ENCODE measurements at regions of chr4 and their contacts with region 1.

Region 1: DNA sequence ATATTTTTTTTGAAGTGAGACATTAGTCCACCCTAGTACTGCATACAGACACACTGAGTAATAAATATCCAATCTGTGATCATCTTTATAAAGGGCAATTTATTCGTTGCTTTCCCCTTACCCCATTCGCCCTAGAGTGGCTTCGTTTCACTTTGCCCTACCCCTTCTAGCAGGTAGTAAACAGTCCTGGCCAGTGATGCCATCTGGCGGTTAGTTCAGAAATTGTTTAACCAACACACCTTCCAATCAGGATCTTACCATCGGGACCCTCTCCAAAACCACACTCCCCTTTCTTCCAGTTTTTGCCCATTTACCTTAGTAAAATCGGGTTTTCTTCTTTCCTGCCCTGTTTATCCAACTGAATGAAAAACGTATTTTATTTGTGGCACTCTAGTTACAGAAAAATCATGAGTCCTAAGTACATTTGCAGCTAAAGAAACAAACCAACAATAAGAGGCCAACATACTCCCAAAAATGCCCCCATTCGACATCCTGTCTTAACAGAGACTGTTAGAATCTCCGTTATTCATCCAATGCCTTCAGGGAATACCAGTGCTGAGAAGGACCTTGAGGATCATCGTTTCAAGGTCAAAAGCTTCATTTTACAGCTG is 2.2 kb downstream of the PPA2 start:
- DNase-seq: peak; percentile 83
- ATAC-seq: peak; percentile 49
- H3K4me3 Mint-ChIP-seq: peak overlapping the region; percentile 98
- H3K27ac Mint-ChIP-seq: peak overlapping the region; percentile 80
- H3K4me1 Mint-ChIP-seq: peaks cover 46% of the 10 kb centered on the region
- H3K27me3 Mint-ChIP-seq: no peaks in the 10 kb centered on the region

Region 2: DNA sequence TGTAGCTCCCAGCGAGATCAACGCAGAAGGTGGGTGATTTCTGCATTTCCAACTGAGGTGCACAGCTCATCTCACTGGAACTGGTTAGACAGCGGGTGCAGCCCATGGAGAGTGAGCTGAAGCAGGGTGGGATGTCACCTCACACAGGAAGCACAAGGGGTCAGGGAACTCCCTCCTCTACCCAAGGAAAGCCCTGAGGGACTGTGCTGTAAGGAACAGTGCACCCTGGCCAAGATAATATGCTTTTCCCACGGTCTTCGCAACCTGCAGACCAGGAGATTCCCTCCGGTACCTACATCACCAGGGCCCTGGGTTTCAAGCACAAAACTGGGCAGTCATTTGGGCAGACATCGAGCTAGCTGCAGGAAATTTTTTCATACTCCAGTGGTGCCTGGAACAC is 541.4 kb before region 1 on chr4:
- CTCF ChIA-PET with region 1: interaction called, 5 read pairs
- POLR2A ChIA-PET with region 1: no interaction called
- intact Hi-C with region 1: loop called (anchors 1 to 2 kb)
- DNase-seq: no peak
- ATAC-seq: no peak
- H3K4me3 Mint-ChIP-seq: no peak overlapping the region
- H3K27ac Mint-ChIP-seq: no peak overlapping the region
- H3K4me1 Mint-ChIP-seq: peaks cover 31% of the 10 kb centered on the region
- H3K27me3 Mint-ChIP-seq: peaks cover 5% of the 10 kb centered on the region

Region 3: GRCh38 chr4:105061136-105061696 is 410.5 kb before region 1 on chr4:
- CTCF ChIA-PET with region 1: no interaction called
- POLR2A ChIA-PET with region 1: no interaction called
- intact Hi-C with region 1: loop called (anchors 1 kb)
- DNase-seq: peak; percentile 64
- ATAC-seq: peak; percentile 62
- H3K4me3 Mint-ChIP-seq: peak overlapping the region; percentile 48
- H3K27ac Mint-ChIP-seq: peak overlapping the region; percentile 89
- H3K4me1 Mint-ChIP-seq: peaks cover 53% of the 10 kb centered on the region
- H3K27me3 Mint-ChIP-seq: peaks cover 2% of the 10 kb centered on the region

Region 4: DNA sequence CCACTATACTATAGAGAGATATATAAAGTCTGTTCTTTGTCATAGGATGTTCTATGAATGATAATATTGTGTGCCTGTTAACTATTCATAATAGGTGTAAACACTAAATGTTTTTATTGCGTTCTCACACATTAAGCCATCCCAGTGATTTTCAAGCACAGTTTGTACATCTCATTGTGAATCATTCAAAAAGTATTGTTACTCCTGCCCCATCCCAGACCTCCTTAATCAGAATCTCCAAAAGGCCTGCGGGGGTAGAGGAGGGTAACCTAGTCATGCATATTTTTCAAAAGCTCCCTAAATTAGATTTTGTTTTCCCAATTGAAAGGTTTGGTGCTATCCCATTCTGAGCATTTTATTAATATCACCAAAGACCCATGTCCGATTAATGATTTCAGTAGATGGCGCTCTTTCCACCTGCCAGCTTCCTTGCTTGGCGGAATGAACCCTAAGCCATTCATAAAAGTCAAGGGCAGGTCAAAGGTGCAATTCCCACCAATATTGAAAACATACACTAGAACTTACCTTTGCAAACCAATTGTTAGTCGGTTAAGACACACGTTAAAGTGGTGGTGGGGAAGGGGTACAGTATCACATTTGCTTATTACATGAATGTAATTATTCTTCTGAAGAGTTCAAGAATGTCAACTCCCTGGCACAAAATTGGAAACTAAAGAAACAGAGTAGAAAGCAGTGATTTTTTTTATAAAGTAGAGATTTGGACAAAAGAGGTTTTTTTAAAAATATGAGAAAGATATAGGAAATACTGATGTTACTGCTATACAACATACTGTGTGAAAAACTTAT is 330.8 kb before region 1 on chr4:
- CTCF ChIA-PET with region 1: interaction called, 16 read pairs
- POLR2A ChIA-PET with region 1: interaction called, 12 read pairs
- intact Hi-C with region 1: loop called (anchors 1 kb)
- DNase-seq: peak; percentile 53
- ATAC-seq: no peak
- H3K4me3 Mint-ChIP-seq: no peak overlapping the region
- H3K27ac Mint-ChIP-seq: no peak overlapping the region
- H3K4me1 Mint-ChIP-seq: peaks cover 23% of the 10 kb centered on the region
- H3K27me3 Mint-ChIP-seq: no peaks in the 10 kb centered on the region

Region 5: GRCh38 chr4:105191621-105192210 is 280.0 kb before region 1 on chr4:
- CTCF ChIA-PET with region 1: interaction called, 3 read pairs
- POLR2A ChIA-PET with region 1: no interaction called
- intact Hi-C with region 1: loop called (anchors 1 to 2 kb)
- DNase-seq: peak; percentile 11
- ATAC-seq: peak; percentile 70
- H3K4me3 Mint-ChIP-seq: peak overlapping the region; percentile 12
- H3K27ac Mint-ChIP-seq: peak overlapping the region; percentile 90
- H3K4me1 Mint-ChIP-seq: peaks cover 94% of the 10 kb centered on the region
- H3K27me3 Mint-ChIP-seq: no peaks in the 10 kb centered on the region

Region 6: DNA sequence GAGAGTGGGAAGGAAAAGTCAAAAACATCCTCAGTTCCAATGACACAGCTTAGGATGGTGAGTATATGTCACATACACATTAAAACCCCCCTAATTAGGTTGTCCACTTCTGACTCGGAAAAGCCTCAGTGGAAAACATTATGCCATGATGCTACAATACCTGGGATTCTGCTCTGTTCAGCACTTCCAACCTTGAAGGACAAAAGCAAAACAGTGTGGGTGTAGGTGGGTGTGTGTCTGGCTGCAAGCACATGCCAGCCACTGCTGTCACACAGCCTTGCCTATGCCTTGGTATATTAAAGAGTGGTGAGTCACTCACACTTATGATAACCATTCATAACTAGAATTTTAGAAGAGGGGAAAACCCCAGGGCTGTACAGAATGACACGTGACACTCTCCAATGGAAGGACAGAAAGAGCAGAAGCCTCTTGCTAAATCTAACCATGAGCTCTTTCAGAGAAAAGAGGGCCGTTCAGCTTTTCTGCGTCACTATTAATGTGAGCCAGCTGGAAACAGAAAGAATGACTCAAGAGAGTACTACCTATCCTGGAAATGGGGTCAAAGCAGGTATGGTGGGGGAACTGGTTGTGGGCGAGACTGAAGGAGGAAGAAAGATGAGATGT is 165.4 kb before region 1 on chr4:
- CTCF ChIA-PET with region 1: interaction called, 8 read pairs
- POLR2A ChIA-PET with region 1: interaction called, 9 read pairs
- intact Hi-C with region 1: loop called (anchors 1 to 5 kb)
- DNase-seq: peak; percentile 79
- ATAC-seq: peak; percentile 92
- H3K4me3 Mint-ChIP-seq: peak overlapping the region; percentile 46
- H3K27ac Mint-ChIP-seq: peak overlapping the region; percentile 91
- H3K4me1 Mint-ChIP-seq: peaks cover 28% of the 10 kb centered on the region
- H3K27me3 Mint-ChIP-seq: peaks cover 6% of the 10 kb centered on the region

Region 7: GRCh38 chr4:105708530-105709391 is 237.1 kb after region 1 on chr4 and contains the starts of genes GSTCD and INTS12:
- CTCF ChIA-PET with region 1: interaction called, 4 read pairs
- POLR2A ChIA-PET with region 1: no interaction called
- intact Hi-C with region 1: loop called (anchors 1 to 5 kb)
- DNase-seq: peak; percentile 93
- ATAC-seq: peak; percentile 93
- H3K4me3 Mint-ChIP-seq: peak within 1 kb of the TSS; percentile 98
- H3K27ac Mint-ChIP-seq: peak within 1 kb of the TSS; percentile 96
- H3K4me1 Mint-ChIP-seq: peaks cover 26% of the 10 kb centered on the region
- H3K27me3 Mint-ChIP-seq: no peaks in the 10 kb centered on the region
- total RNA-seq, gene GSTCD: 16.1 to 16.3 TPM
- total RNA-seq, gene INTS12: 20.2 to 28.4 TPM

Region 8: GRCh38 chr4:105843941-105844340 is 372.3 kb after region 1 on chr4:
- CTCF ChIA-PET with region 1: no interaction called
- POLR2A ChIA-PET with region 1: no interaction called
- intact Hi-C with region 1: no loop called
- DNase-seq: no peak
- ATAC-seq: no peak
- H3K4me3 Mint-ChIP-seq: no peak overlapping the region
- H3K27ac Mint-ChIP-seq: no peak overlapping the region
- H3K4me1 Mint-ChIP-seq: no peaks in the 10 kb centered on the region
- H3K27me3 Mint-ChIP-seq: no peaks in the 10 kb centered on the region

Measured in activated CD4-positive, alpha-beta T cell treated with anti-CD3 and anti-CD28 coated beads for 36 hours (primary cell).